Activated naive CD4-positive, alpha-beta T cell treated with anti-CD3 and anti-CD28 coated beads for 36 hours (primary cell): ENCODE measurements at regions of chr20 and their contacts with region 1.

Region 1: DNA sequence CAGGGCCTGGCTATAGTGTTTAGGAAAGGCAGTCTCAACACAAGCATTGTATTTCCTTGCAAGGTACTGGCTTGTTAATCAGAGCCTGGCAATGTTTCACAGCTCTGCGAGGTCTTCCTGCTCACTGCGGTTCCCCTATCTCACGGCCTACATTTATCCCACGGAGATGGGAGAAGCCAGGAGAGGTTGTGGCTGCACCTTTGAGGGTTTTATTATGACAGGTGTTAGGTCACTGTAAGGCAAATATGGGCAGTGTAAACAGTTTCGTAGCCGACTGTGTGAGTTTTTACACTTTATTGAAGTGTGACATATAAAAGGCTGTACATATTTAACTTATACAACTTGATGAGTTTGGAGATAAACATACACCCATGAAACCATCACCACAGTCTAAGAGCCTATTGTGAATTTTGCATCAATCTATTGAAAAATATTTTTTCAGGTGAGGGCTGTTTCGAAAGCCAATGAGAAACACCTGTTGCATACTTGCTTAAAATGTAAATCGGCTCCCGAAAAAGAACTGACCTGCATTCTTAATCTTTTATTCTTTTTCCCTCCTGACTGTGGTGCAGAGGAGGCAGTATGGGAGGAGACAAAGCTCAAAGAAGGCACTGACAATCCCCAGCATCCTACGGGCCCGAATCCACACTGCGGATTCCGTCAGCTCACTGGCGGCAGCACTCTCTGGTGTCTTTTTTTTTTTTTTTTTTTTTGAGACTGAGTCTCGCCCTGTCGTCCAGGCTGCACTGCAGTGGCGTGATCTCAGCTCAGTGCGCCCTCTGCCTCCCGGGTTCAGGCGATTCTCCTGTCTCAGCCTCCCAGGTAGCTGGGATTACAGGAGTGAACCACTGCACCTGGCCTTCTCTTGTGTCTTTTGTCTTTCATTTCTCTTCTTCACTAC is 7.5 kb upstream of the RBM38 start:
- DNase-seq: no peak
- H3K4me3 Mint-ChIP-seq: no peak overlapping the region
- H3K27ac Mint-ChIP-seq: no peak overlapping the region
- H3K4me1 Mint-ChIP-seq: peaks cover 16% of the 10 kb centered on the region
- H3K27me3 Mint-ChIP-seq: no peaks in the 10 kb centered on the region

Region 2: GRCh38 chr20:57323034-57323433 is 60.7 kb before region 1 on chr20:
- CTCF ChIA-PET with region 1: no interaction called
- intact Hi-C with region 1: no loop called
- DNase-seq: peak; percentile 9
- H3K4me3 Mint-ChIP-seq: no peak overlapping the region
- H3K27ac Mint-ChIP-seq: no peak overlapping the region
- H3K4me1 Mint-ChIP-seq: no peaks in the 10 kb centered on the region
- H3K27me3 Mint-ChIP-seq: peaks cover 34% of the 10 kb centered on the region

Region 3: DNA sequence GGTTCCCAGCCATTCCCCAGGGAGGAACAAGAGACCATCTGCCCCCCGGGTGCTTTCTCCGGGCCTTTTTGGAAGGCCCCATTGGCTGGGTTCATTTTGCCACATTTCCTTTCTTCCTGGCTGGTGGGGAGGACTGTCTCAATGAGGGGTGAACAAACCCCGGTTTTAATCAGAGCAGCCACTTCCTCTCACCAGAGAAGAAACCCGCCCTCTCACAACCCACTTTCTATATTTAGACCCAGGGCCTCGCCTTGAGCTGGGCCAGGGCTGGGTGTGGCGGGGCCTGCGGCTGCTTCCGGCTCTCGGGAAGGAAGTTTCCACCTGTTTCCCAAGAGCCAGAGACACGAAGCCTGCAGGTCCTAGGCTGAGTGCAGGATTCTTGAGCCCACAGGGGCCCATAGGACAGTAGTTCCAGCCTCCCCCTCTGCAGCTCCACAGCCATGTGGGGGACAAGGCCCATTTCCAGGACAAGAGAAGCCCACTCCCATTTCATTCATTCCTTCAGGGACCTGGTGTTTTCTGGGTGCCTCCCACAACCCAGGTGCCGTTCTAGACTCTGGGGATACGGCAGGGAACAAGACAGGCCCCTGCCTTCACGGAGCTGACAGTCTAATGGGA is 49.3 kb after region 1 on chr20:
- CTCF ChIA-PET with region 1: interaction called, 3 read pairs
- intact Hi-C with region 1: loop called (anchors 1 kb)
- DNase-seq: peak; percentile 85
- H3K4me3 Mint-ChIP-seq: peak overlapping the region; percentile 18
- H3K27ac Mint-ChIP-seq: peak overlapping the region; percentile 87
- H3K4me1 Mint-ChIP-seq: peaks cover 58% of the 10 kb centered on the region
- H3K27me3 Mint-ChIP-seq: no peaks in the 10 kb centered on the region

Region 4: GRCh38 chr20:57493091-57493615 is 109.5 kb after region 1 on chr20:
- CTCF ChIA-PET with region 1: interaction called, 33 read pairs
- intact Hi-C with region 1: loop called (anchors 1 kb)
- DNase-seq: no peak
- H3K4me3 Mint-ChIP-seq: no peak overlapping the region
- H3K27ac Mint-ChIP-seq: no peak overlapping the region
- H3K4me1 Mint-ChIP-seq: peaks cover 4% of the 10 kb centered on the region
- H3K27me3 Mint-ChIP-seq: no peaks in the 10 kb centered on the region